ENCODE measurements at regions of chr15 and their contacts with region 1.

Region 1: GRCh38 chr15:52528991-52529926 is 579 bp upstream of the MYO5A start:
- DNase-seq: peak; percentile 84 to 87 (median 87)
- H3K4me3 ChIP-seq: peak overlapping the region; percentile 7 to 58
- H3K4me3 Mint-ChIP-seq: peak overlapping the region; percentile 79 to 98 (median 83)
- H3K27ac ChIP-seq: peak overlapping the region; percentile 91
- H3K27ac Mint-ChIP-seq: peak overlapping the region; percentile 85 to 97 (median 93)
- H3K4me1 ChIP-seq: peaks cover 20% of the 10 kb centered on the region
- H3K4me1 Mint-ChIP-seq: peaks cover 30 to 40% (median 35%) of the 10 kb centered on the region in 4 donors
- H3K27me3 ChIP-seq: no peaks in the 10 kb centered on the region
- H3K27me3 Mint-ChIP-seq: no peaks in the 10 kb centered on the region

Region 2: GRCh38 chr15:52331490-52332240 is 197.6 kb before region 1 on chr15:
- CTCF ChIA-PET with region 1: interaction called, 7 read pairs
- POLR2A ChIA-PET with region 1: interaction called, 4 read pairs
- intact Hi-C with region 1: loop called (anchors 1 kb)
- DNase-seq: peak; percentile 64 to 74 (median 66)
- H3K4me3 ChIP-seq: no peak overlapping the region
- H3K4me3 Mint-ChIP-seq: peak overlapping the region in 7 of 8 donors; percentile 46 to 79 (median 72)
- H3K27ac ChIP-seq: no peak overlapping the region
- H3K27ac Mint-ChIP-seq: peak overlapping the region; percentile 70 to 93 (median 80)
- H3K4me1 ChIP-seq: peaks cover 13% of the 10 kb centered on the region
- H3K4me1 Mint-ChIP-seq: peaks cover 13 to 21% (median 15%) of the 10 kb centered on the region in 4 donors
- H3K27me3 ChIP-seq: no peaks in the 10 kb centered on the region
- H3K27me3 Mint-ChIP-seq: no peaks in the 10 kb centered on the region

Region 3: GRCh38 chr15:52417521-52417920 is 111.7 kb before region 1 on chr15:
- CTCF ChIA-PET with region 1: no interaction called
- POLR2A ChIA-PET with region 1: interaction called, 3 read pairs
- intact Hi-C with region 1: loop called (anchors 5 kb)
- DNase-seq: no peak
- H3K4me3 ChIP-seq: no peak overlapping the region
- H3K4me3 Mint-ChIP-seq: no peak overlapping the region
- H3K27ac ChIP-seq: no peak overlapping the region
- H3K27ac Mint-ChIP-seq: no peak overlapping the region
- H3K4me1 ChIP-seq: no peaks in the 10 kb centered on the region
- H3K4me1 Mint-ChIP-seq: peaks cover 0 to 2% (median 0%) of the 10 kb centered on the region in 4 donors
- H3K27me3 ChIP-seq: no peaks in the 10 kb centered on the region
- H3K27me3 Mint-ChIP-seq: no peaks in the 10 kb centered on the region

Region 4: GRCh38 chr15:52466134-52466701 is 63.0 kb before region 1 on chr15:
- CTCF ChIA-PET with region 1: interaction called, 6 read pairs
- POLR2A ChIA-PET with region 1: interaction called, 36 read pairs
- intact Hi-C with region 1: loop called (anchors 1 kb)
- DNase-seq: peak in 3 of 5 donors; percentile 8 to 49 (median 17)
- H3K4me3 ChIP-seq: no peak overlapping the region
- H3K4me3 Mint-ChIP-seq: peak overlapping the region in 4 of 8 donors; percentile 9 to 39 (median 28)
- H3K27ac ChIP-seq: peak overlapping the region; percentile 35
- H3K27ac Mint-ChIP-seq: peak overlapping the region; percentile 26 to 95 (median 87)
- H3K4me1 ChIP-seq: peaks cover 47% of the 10 kb centered on the region
- H3K4me1 Mint-ChIP-seq: peaks cover 43 to 65% (median 53%) of the 10 kb centered on the region in 4 donors
- H3K27me3 ChIP-seq: no peaks in the 10 kb centered on the region
- H3K27me3 Mint-ChIP-seq: no peaks in the 10 kb centered on the region

Region 5: GRCh38 chr15:52509500-52510245 is 19.6 kb before region 1 on chr15:
- CTCF ChIA-PET with region 1: interaction called, 4 read pairs
- POLR2A ChIA-PET with region 1: interaction called, 9 read pairs
- intact Hi-C with region 1: loop called (anchors 2 kb)
- DNase-seq: no peak
- H3K4me3 ChIP-seq: no peak overlapping the region
- H3K4me3 Mint-ChIP-seq: peak overlapping the region in 1 of 8 donors; percentile 19
- H3K27ac ChIP-seq: no peak overlapping the region
- H3K27ac Mint-ChIP-seq: peak overlapping the region in 4 of 7 donors; percentile 22 to 51 (median 40)
- H3K4me1 ChIP-seq: peaks cover 19% of the 10 kb centered on the region
- H3K4me1 Mint-ChIP-seq: peaks cover 38 to 55% (median 47%) of the 10 kb centered on the region in 4 donors
- H3K27me3 ChIP-seq: no peaks in the 10 kb centered on the region
- H3K27me3 Mint-ChIP-seq: no peaks in the 10 kb centered on the region

Region 6: DNA sequence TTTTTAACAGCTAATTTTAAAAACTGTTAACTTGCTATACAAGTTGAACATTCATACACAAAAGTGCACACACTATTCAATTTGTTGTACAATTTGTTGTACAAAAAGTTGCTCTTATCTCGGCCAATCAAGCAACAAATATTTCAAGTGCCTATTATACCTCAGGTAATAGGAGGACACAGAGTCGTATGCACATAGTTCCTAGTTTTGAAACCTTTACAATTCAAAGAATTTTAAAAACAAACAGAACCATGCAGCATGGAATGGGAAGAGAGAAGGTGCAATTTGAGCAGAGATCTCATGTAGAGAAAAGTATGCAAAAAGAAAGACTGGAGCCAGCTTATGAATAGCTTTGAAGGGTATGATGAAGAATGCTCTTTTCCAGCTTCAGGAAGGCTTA is 86.0 kb after region 1 on chr15:
- CTCF ChIA-PET with region 1: no interaction called
- POLR2A ChIA-PET with region 1: no interaction called
- intact Hi-C with region 1: no loop called
- DNase-seq: no peak
- H3K4me3 ChIP-seq: no peak overlapping the region
- H3K4me3 Mint-ChIP-seq: no peak overlapping the region
- H3K27ac ChIP-seq: no peak overlapping the region
- H3K27ac Mint-ChIP-seq: peak overlapping the region in 1 of 7 donors; percentile 15
- H3K4me1 ChIP-seq: no peaks in the 10 kb centered on the region
- H3K4me1 Mint-ChIP-seq: peaks cover 0 to 4% (median under 1%) of the 10 kb centered on the region in 4 donors
- H3K27me3 ChIP-seq: no peaks in the 10 kb centered on the region
- H3K27me3 Mint-ChIP-seq: no peaks in the 10 kb centered on the region

Region 7: GRCh38 chr15:52679232-52680040 is 150.2 kb after region 1 on chr15 and contains the start of gene ATOSA:
- CTCF ChIA-PET with region 1: no interaction called
- POLR2A ChIA-PET with region 1: interaction called, 7 read pairs
- intact Hi-C with region 1: loop called (anchors 1 kb)
- DNase-seq: peak; percentile 91 to 96 (median 92)
- H3K4me3 ChIP-seq: peak within 1 kb of the TSS; percentile 55 to 82
- H3K4me3 Mint-ChIP-seq: peak within 1 kb of the TSS; percentile 93 to 99 (median 99)
- H3K27ac ChIP-seq: peak within 1 kb of the TSS; percentile 97
- H3K27ac Mint-ChIP-seq: peak within 1 kb of the TSS; percentile 93 to 100 (median 100)
- H3K4me1 ChIP-seq: peaks cover 61% of the 10 kb centered on the region
- H3K4me1 Mint-ChIP-seq: peaks cover 28 to 80% (median 41%) of the 10 kb centered on the region in 4 donors
- H3K27me3 ChIP-seq: no peaks in the 10 kb centered on the region
- H3K27me3 Mint-ChIP-seq: no peaks in the 10 kb centered on the region
- total RNA-seq, gene ATOSA: 95.6 to 97.1 TPM

Region 8: DNA sequence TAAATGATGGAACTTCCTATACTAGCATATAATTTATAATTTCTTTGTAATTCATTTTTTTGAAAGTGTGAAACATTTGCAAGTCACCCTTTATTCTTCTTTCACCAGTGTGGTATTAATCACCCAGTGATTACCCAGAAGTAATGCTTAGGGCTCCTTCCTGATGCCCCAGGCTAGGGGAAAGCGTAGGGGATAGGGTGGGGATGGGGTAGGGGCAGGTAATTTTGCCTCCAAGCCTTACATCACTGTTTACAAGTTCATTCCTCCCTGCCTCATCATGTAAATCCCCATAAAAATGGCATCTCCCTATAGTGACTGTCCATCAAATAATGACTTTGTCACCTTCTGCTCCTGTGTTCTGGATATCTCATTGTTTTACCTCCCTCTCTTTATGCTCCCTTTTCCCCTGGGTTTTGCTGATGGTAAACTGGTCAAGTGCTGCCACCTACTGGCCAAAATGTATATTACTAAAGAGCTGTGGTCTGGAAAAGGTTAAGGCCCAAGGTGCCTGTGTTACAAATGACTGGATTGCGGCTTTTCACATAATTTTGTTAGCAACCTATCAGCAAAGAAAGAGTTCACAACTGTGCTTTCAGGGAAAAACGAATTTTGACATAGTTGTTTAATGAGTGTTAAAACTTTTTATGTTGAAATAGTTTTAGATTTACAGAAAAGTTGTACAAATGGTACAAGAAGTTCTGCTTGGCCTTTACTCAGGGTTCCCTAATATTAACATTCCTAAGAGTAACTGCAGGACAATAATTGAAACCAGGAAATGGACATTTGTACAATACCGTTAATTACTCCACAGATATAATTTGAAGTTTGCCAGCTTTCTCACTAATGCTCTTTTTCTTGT is 206.2 kb after region 1 on chr15:
- CTCF ChIA-PET with region 1: no interaction called
- POLR2A ChIA-PET with region 1: interaction called, 3 read pairs
- intact Hi-C with region 1: loop called (anchors 1 kb)
- DNase-seq: peak; percentile 76 to 83 (median 77)
- H3K4me3 ChIP-seq: no peak overlapping the region
- H3K4me3 Mint-ChIP-seq: no peak overlapping the region
- H3K27ac ChIP-seq: no peak overlapping the region
- H3K27ac Mint-ChIP-seq: peak overlapping the region in 2 of 7 donors; percentile 7 to 47
- H3K4me1 ChIP-seq: peaks cover 3% of the 10 kb centered on the region
- H3K4me1 Mint-ChIP-seq: peaks cover 1 to 5% (median 3%) of the 10 kb centered on the region in 4 donors
- H3K27me3 ChIP-seq: no peaks in the 10 kb centered on the region
- H3K27me3 Mint-ChIP-seq: peaks cover 6 to 7% of the 10 kb centered on the region in 2 donors